ENCODE measurements at regions of chr3 and their contacts with region 1.

Region 1: GRCh38 chr3:196073188-196073838 is 8.6 kb downstream of the TFRC start:
- DNase-seq: peak; percentile 26
- H3K4me3 ChIP-seq: no peak overlapping the region
- H3K27ac ChIP-seq: no peak overlapping the region
- H3K27me3 ChIP-seq: no peaks in the 10 kb centered on the region
- CTCF ChIP-seq: peak; percentile 89

Region 2: GRCh38 chr3:195823280-195823679 is 250.0 kb before region 1 on chr3:
- CTCF ChIA-PET with region 1: no interaction called
- POLR2A ChIA-PET with region 1: no interaction called
- DNase-seq: no peak
- H3K4me3 ChIP-seq: no peak overlapping the region
- H3K27ac ChIP-seq: no peak overlapping the region
- H3K27me3 ChIP-seq: peaks cover 13% of the 10 kb centered on the region
- CTCF ChIP-seq: no peak

Region 3: GRCh38 chr3:195956571-195956970 is 116.7 kb before region 1 on chr3:
- CTCF ChIA-PET with region 1: no interaction called
- POLR2A ChIA-PET with region 1: no interaction called
- DNase-seq: no peak
- H3K4me3 ChIP-seq: no peak overlapping the region
- H3K27ac ChIP-seq: no peak overlapping the region
- H3K27me3 ChIP-seq: peaks cover 4% of the 10 kb centered on the region
- CTCF ChIP-seq: no peak

Region 4: GRCh38 chr3:196051282-196052076 is 21.8 kb before region 1 on chr3:
- CTCF ChIA-PET with region 1: interaction called, 21 read pairs
- POLR2A ChIA-PET with region 1: interaction called, 3 read pairs
- DNase-seq: no peak
- H3K4me3 ChIP-seq: no peak overlapping the region
- H3K27ac ChIP-seq: no peak overlapping the region
- H3K27me3 ChIP-seq: no peaks in the 10 kb centered on the region
- CTCF ChIP-seq: no peak

Region 5: DNA sequence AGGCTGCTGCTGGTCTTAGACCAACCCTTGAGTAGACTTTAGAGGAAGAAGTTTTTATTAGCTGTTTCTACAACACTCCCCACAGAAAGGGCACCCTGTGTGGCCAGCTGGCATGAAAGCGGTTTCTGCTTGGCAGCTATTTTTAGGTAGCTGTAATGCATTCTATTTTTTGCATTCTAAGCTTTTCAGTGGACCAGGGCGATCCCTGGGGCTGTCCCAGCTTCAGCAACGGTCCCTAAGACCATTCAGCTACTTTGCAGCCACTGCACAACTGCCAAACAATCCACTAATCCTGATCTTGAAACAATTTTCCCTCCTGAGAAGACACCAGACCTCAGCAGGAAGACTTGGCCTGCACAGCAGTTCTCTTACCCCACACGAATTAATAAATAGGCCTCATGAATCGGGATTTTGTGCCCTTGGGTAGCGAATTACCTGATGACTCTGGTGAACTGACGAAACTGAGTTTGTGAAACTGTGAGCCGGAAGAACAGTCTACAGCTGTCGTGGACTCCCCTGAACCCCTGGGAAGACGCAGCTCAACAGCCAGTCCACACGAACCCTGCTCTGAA is 23.2 kb after region 1 on chr3:
- CTCF ChIA-PET with region 1: interaction called, 13 read pairs
- POLR2A ChIA-PET with region 1: no interaction called
- DNase-seq: no peak
- H3K4me3 ChIP-seq: no peak overlapping the region
- H3K27ac ChIP-seq: no peak overlapping the region
- H3K27me3 ChIP-seq: peaks cover 11% of the 10 kb centered on the region
- CTCF ChIP-seq: no peak

Region 6: GRCh38 chr3:196179380-196180308 is 106.3 kb after region 1 on chr3:
- CTCF ChIA-PET with region 1: interaction called, 10 read pairs
- POLR2A ChIA-PET with region 1: no interaction called
- DNase-seq: peak; percentile 36
- H3K4me3 ChIP-seq: no peak overlapping the region
- H3K27ac ChIP-seq: peak overlapping the region; percentile 57
- H3K27me3 ChIP-seq: peaks cover 2% of the 10 kb centered on the region
- CTCF ChIP-seq: no peak

Region 7: DNA sequence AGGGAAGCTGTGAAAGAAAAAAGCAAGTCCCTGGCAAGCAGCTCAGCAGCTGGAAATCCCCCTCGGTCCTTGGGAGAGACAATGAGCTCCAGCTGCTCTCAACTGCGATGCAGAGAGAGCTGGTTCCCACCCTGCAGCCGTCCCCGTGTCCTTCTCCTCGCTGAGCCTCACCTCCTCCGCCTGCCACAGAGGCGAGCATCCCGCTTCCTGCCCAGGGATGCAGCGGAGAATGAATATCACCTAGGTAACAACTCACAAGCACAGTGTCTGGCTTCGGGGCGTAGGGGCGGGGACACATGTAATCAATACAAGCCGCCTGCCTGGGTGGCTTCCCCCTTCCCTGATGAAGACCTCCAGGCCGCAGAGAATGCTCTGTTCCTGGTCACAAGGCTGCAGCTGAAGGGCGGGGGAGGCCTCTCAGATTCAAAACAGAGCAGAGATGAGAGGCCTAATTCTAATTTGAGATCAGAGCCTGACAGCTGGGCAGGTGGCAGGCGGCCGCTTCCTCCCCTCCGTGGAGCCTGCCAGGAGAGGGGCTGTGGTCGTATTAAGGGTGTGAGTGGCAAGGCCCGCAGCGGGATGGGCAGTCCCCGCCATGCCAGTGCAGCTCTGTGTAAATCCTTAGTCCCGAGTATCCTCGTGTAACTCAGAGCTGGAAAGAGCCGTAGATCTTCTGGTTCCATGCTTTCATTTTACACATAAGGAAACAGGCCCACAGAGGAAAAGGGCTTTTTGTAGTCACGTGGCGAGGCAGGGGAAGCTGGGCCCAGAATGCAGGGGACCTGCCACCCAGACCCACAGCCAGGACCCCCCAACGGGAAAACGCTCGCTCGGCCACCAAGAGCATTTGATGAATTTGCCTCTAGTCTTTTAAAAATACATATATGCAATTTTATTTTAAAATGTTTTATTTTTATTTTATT is 113.6 kb after region 1 on chr3:
- CTCF ChIA-PET with region 1: interaction called, 20 read pairs
- POLR2A ChIA-PET with region 1: no interaction called
- DNase-seq: no peak
- H3K4me3 ChIP-seq: no peak overlapping the region
- H3K27ac ChIP-seq: no peak overlapping the region
- H3K27me3 ChIP-seq: no peaks in the 10 kb centered on the region
- CTCF ChIP-seq: no peak

Region 8: GRCh38 chr3:196202516-196202970 is 129.2 kb after region 1 on chr3:
- CTCF ChIA-PET with region 1: interaction called, 185 read pairs
- POLR2A ChIA-PET with region 1: no interaction called
- DNase-seq: no peak
- H3K4me3 ChIP-seq: peak overlapping the region; percentile 31
- H3K27ac ChIP-seq: no peak overlapping the region
- H3K27me3 ChIP-seq: peaks cover 6% of the 10 kb centered on the region
- CTCF ChIP-seq: no peak

Region 9: GRCh38 chr3:196339044-196339443 is 265.7 kb after region 1 on chr3:
- CTCF ChIA-PET with region 1: interaction called, 11 read pairs
- POLR2A ChIA-PET with region 1: no interaction called
- DNase-seq: no peak
- H3K4me3 ChIP-seq: no peak overlapping the region
- H3K27ac ChIP-seq: no peak overlapping the region
- H3K27me3 ChIP-seq: no peaks in the 10 kb centered on the region
- CTCF ChIP-seq: no peak